ENCODE measurements at regions of chr20 and their contacts with region 1.

Region 1: DNA sequence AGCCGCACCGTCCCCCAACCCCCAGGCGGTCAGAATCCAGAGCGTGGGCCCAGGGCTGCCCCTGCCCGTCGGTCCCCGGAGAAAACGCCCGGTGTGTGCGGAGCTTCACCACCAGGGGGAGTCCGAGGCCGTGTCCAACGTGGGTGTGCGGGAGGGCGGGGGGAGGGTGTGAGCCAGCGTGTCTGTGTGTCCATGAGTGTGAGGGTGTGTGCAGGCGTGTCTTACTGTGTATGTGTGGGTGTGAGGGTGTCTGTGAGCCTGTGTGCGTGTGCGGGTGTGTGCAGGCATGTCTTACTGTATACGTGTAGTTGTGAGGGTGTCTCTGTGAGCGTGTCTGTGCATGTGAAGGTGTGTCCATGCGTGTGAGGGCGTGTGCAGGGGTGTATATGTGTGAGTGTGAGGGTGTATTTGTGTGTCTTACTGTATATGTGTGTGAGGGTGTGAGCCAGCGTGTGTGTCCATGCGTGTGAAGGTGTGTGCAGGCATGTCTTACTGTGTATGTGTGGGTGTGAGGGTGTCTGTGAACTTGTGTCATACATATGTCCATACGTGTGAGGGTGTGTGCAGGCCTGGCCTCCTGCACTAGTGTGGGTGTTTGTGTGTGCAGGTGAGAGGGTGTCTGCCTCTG is 24.6 kb upstream of the GATA5 start:
- DNase-seq: peak; percentile 42 to 85 (median 72)
- ATAC-seq: peak; percentile 73 to 83 (median 78)
- H3K4me3 ChIP-seq: no peak overlapping the region
- H3K4me3 Mint-ChIP-seq: no peak overlapping the region
- H3K27ac ChIP-seq: no peak overlapping the region
- H3K27ac Mint-ChIP-seq: peak overlapping the region in 1 of 2 donors; percentile 4
- H3K4me1 ChIP-seq: peaks cover 0 to 22% of the 10 kb centered on the region in 2 experiments
- H3K4me1 Mint-ChIP-seq: peaks cover 12 to 27% (median 14%) of the 10 kb centered on the region in 3 donors
- H3K27me3 ChIP-seq: peaks cover 0 to 19% of the 10 kb centered on the region in 2 experiments
- H3K27me3 Mint-ChIP-seq: peaks cover 3 to 5% of the 10 kb centered on the region in 2 donors

Region 2: DNA sequence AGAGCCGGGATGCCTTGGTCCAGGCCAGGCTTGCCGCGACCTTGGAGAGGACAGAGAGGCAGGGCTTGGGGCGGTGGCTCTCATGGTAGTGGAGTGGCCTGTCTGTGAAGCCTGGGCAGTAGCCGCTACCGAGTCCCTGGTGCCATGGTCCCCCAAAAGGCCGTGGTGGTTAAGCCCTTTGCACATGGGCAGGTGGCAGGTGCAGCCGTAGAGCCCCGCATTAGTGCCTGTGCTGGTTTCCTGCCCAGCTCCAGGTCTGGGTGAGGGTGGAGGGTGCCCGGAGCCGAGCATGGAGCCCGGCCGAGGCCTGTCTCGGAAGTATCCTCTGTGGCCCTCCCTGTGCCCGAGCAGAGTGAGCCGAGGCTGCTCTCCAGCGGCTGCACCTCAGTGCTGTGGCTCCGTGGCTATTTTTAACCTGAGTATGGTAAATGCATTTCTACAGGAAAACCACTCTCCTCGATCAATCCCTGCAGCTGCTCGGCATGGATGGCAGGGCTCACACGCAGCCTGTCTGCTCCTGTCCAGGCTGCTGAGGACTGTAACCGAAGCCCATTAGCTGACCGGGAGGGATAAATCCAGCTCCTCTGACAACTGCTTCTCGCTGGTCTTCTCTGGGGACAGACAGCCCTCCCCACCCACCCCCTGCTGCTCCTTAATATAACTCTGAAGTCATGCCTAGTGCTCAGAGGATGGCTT is 11.7 kb after region 1 on chr20:
- CTCF ChIA-PET with region 1: no interaction called
- POLR2A ChIA-PET with region 1: interaction called in 1 of 2 experiments, 13 read pairs
- DNase-seq: no peak
- ATAC-seq: no peak
- H3K4me3 ChIP-seq: no peak overlapping the region
- H3K4me3 Mint-ChIP-seq: no peak overlapping the region
- H3K27ac ChIP-seq: no peak overlapping the region
- H3K27ac Mint-ChIP-seq: no peak overlapping the region
- H3K4me1 ChIP-seq: peaks cover 9 to 22% of the 10 kb centered on the region in 2 experiments
- H3K4me1 Mint-ChIP-seq: peaks cover 3 to 7% (median 5%) of the 10 kb centered on the region in 3 donors
- H3K27me3 ChIP-seq: peaks cover 0 to 60% of the 10 kb centered on the region in 2 experiments
- H3K27me3 Mint-ChIP-seq: peaks cover 0 to 29% of the 10 kb centered on the region in 2 donors

Region 3: DNA sequence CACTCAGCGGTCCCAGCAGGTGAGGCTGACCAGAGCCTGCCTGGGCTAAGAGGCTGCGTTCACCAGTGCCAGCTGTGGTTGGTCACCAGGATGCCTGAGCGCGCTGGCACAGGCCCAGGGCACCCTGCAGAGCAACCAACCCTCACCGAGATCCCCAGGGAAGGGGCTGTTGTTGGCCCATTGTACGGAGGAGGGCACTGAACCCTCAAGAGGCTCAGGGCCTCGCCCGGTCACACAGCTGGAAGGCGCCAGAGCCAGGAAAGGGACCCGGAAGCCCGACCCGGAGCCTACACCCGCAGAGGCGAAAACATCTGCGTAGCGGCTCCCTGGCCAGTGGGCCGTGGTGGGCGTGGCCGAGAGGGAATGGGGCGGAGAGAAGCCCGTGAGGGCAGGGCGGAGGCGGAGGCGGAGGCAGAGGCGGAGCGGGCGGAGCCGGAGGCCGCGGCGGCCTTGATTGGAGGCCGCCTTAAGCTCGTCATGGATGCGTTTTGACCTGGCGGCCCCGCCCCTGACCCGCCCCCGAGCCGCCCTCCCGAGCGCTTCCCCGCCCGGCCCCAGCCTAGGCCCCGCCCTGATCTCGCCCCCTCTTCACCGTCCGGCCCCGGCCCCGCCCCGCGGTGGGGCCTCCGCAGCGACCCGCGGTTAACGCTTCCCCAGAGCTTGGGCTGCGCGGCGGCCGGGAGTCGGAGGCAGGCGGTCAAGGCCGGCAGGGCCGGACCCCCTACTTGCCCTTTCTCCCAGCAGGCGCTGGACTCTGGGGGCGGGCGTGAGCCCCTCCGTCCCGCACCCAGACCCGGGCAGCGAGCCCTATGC is 293.8 kb after region 1 on chr20:
- CTCF ChIA-PET with region 1: interaction called, 4 to 10 read pairs
- POLR2A ChIA-PET with region 1: no interaction called
- DNase-seq: peak; percentile 72 to 97 (median 86)
- ATAC-seq: peak; percentile 76 to 80 (median 76)
- H3K4me3 ChIP-seq: peak overlapping the region; percentile 72 to 81
- H3K4me3 Mint-ChIP-seq: peak overlapping the region; percentile 85 to 91 (median 86)
- H3K27ac ChIP-seq: peak overlapping the region; percentile 99
- H3K27ac Mint-ChIP-seq: peak overlapping the region; percentile 93 to 96
- H3K4me1 ChIP-seq: peaks cover 15 to 57% of the 10 kb centered on the region in 2 experiments
- H3K4me1 Mint-ChIP-seq: peaks cover 38 to 41% (median 38%) of the 10 kb centered on the region in 3 donors
- H3K27me3 ChIP-seq: peaks cover 0 to 4% of the 10 kb centered on the region in 2 experiments
- H3K27me3 Mint-ChIP-seq: no peaks in the 10 kb centered on the region

Region 4: GRCh38 chr20:62808211-62808865 is 308.0 kb after region 1 on chr20:
- CTCF ChIA-PET with region 1: interaction called, 4 to 12 read pairs
- POLR2A ChIA-PET with region 1: no interaction called
- DNase-seq: peak; percentile 22 to 82 (median 67)
- ATAC-seq: peak; percentile 35 to 47 (median 40)
- H3K4me3 ChIP-seq: no peak overlapping the region
- H3K4me3 Mint-ChIP-seq: peak overlapping the region; percentile 42 to 63 (median 62)
- H3K27ac ChIP-seq: no peak overlapping the region
- H3K27ac Mint-ChIP-seq: peak overlapping the region; percentile 68 to 75
- H3K4me1 ChIP-seq: peaks cover 6 to 53% of the 10 kb centered on the region in 2 experiments
- H3K4me1 Mint-ChIP-seq: peaks cover 29 to 31% (median 29%) of the 10 kb centered on the region in 3 donors
- H3K27me3 ChIP-seq: no peaks in the 10 kb centered on the region
- H3K27me3 Mint-ChIP-seq: no peaks in the 10 kb centered on the region

Measured in T-cell (primary cell).